Left ventricle myocardium inferior (tissue), 1 donor: ENCODE measurements at regions of chr7 and their contacts with region 1.

Region 1: GRCh38 chr7:30986753-30987152 is 23.0 kb downstream of the GHRHR start:
- DNase-seq: no peak
- H3K4me3 ChIP-seq: no peak overlapping the region
- H3K27ac ChIP-seq: no peak overlapping the region
- H3K4me1 ChIP-seq: peaks cover 24% of the 10 kb centered on the region
- H3K27me3 ChIP-seq: peaks cover 63% of the 10 kb centered on the region
- CTCF ChIP-seq: no peak

Region 2: GRCh38 chr7:30493228-30493627 is 493.5 kb before region 1 on chr7:
- intact Hi-C with region 1: no loop called
- DNase-seq: no peak
- H3K4me3 ChIP-seq: no peak overlapping the region
- H3K27ac ChIP-seq: no peak overlapping the region
- H3K4me1 ChIP-seq: no peaks in the 10 kb centered on the region
- H3K27me3 ChIP-seq: no peaks in the 10 kb centered on the region
- CTCF ChIP-seq: no peak

Region 3: DNA sequence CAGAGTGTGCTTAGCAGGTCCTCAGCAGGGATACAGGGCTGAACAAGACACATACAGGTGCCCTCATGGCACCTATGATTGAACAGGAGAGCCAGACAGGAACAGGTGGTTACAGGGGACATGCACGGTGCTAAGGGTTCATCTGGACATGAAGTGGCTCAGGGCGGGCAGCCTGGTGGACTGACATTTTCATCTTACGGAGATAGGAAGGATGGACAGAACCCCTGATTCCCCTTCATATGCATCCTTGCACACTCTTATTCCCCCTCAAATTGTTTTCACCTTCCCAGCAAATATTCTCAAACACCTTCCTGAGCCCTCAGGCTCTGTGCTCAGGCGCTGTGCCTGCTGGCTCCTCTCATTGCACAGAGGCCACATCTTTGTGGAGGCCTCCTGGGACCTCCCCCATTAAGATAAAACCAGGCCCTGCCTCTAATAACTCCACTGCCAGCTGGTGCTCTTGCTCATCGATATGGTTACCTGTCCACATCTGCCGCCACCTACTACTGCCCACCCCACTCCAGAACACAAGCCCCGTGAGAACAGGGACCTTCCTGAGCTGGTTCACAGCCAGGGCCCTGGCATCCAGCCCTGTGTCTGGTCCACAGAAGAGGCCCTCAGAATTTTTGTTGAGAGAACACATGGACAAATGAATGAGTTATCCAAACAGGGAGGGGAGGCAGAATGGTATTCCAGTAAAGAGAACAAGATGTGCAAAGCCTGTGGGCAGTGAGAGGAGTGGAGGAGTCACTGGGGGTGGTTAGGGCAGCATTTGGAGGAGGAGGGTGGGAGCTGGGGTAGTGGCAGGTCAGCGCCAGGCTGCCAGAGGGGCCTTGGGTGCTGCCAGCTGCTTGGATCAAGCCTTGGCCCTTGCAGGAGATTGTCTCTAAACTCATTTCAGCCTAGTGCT is 144.0 kb before region 1 on chr7:
- intact Hi-C with region 1: no loop called
- DNase-seq: no peak
- H3K4me3 ChIP-seq: no peak overlapping the region
- H3K27ac ChIP-seq: peak overlapping the region; percentile 27
- H3K4me1 ChIP-seq: peaks cover 58% of the 10 kb centered on the region
- H3K27me3 ChIP-seq: no peaks in the 10 kb centered on the region
- CTCF ChIP-seq: no peak

Region 4: DNA sequence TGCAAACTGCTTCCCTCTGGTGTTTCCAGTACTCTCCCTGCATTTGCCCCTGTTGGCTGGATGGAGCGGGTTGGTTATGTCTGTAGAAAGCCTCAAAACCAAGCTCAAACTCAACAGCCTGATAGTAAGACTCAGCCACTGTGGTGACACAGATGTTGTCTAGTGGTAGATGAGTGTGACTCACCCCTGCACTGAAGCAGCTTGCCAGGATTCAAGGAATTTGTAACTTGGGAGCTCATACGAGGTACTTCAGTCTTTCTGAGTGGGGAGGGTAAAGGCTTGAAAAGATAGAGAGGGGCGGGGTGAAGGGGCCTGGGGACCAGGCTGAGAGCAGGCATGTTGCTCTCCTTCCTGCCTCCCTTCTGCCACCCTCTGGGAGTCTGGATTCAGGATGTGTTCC is 98.0 kb before region 1 on chr7:
- intact Hi-C with region 1: no loop called
- DNase-seq: no peak
- H3K4me3 ChIP-seq: no peak overlapping the region
- H3K27ac ChIP-seq: peak overlapping the region; percentile 16
- H3K4me1 ChIP-seq: peaks cover 38% of the 10 kb centered on the region
- H3K27me3 ChIP-seq: no peaks in the 10 kb centered on the region
- CTCF ChIP-seq: no peak

Region 5: DNA sequence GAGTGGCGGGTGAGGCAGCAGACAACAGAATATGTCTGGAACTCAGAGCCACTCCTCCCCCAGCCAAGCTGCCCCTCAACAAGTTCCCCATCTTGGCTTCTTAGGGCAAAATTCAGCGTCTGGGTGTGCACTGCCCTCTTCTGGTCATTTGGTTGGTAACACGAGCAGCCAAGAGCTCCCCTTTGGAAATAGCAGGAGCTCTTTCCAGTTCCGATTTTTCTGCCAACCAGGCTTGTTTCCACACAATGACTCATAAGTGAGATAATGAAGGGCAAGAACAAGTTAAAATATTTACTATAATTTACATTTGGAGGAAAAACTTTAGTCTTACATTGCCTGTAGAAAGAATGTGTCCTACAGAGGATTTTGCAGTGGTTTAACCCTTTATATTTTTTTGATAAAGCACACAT is 135.9 kb after region 1 on chr7:
- intact Hi-C with region 1: loop called (anchors 2 kb)
- DNase-seq: peak; percentile 48
- H3K4me3 ChIP-seq: no peak overlapping the region
- H3K27ac ChIP-seq: no peak overlapping the region
- H3K4me1 ChIP-seq: peaks cover 6% of the 10 kb centered on the region
- H3K27me3 ChIP-seq: peaks cover 46% of the 10 kb centered on the region
- CTCF ChIP-seq: peak; percentile 92